Stomach (tissue), 19 donors: ENCODE measurements at regions of chr19 and their contacts with region 1.

Region 1: GRCh38 chr19:40806488-40807468 is 7.8 kb downstream of the EGLN2 start:
- DNase-seq: peak; percentile 62 to 96
- H3K4me3 ChIP-seq: peak overlapping the region in 2 of 4 donors; percentile 4 to 33
- H3K27ac ChIP-seq: peak overlapping the region; percentile 68 to 99 (median 95)
- H3K4me1 ChIP-seq: peaks cover 71 to 96% (median 93%) of the 10 kb centered on the region in 4 donors
- H3K27me3 ChIP-seq: no peaks in the 10 kb centered on the region
- CTCF ChIP-seq: peak in 5 of 7 experiments; percentile 58 to 88 (median 82)
- EP300 ChIP-seq: no peak
- POLR2A ChIP-seq: no peak

Region 2: DNA sequence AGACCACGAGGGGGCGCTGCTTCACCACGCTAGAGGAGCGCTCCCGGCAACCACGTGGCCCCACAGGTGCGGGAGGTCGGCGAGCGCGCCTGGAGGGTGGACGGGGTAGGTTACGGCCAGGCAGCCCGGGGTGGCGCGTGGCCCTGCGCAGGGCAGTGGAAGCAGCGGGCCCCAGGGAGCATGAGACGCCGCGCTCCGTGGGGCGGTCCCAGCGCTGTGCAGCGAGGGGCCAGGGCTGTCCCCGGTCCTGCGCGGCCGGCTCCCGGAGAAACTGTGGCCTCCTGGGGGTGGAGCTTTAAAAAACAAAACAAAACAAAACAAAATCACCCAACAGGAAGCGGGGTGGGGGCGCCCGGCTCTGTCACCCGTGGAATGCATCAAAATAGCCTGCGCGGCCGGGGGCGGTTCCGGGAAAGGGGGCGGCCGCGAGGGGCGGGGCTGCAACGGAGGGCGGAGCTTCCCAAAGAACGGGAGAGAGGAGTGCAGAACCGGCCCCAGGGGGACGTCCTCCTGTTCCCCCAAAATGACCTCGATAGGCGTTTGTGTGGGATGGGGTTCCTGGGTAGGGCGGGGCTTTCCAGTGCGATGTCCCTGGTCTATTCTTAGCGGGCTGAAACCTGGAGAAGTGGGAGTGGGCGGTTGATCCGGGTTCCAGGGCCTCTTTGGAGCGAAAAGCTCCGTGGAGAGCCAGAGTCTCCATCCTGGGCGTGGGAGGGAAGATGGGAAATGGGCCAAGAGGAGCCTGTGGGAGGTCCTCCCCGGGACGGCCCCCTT is 143.7 kb before region 1 on chr19:
- intact Hi-C with region 1: loop called (anchors 5 kb)
- DNase-seq: peak; percentile 94 to 96
- H3K4me3 ChIP-seq: peak overlapping the region; percentile 71 to 75 (median 72)
- H3K27ac ChIP-seq: peak overlapping the region; percentile 85 to 93 (median 89)
- H3K4me1 ChIP-seq: peaks cover 12 to 40% (median 23%) of the 10 kb centered on the region in 4 donors
- H3K27me3 ChIP-seq: no peaks in the 10 kb centered on the region
- CTCF ChIP-seq: peak in 4 of 7 experiments; percentile 96 to 98 (median 97)
- EP300 ChIP-seq: no peak
- POLR2A ChIP-seq: no peak

Region 3: DNA sequence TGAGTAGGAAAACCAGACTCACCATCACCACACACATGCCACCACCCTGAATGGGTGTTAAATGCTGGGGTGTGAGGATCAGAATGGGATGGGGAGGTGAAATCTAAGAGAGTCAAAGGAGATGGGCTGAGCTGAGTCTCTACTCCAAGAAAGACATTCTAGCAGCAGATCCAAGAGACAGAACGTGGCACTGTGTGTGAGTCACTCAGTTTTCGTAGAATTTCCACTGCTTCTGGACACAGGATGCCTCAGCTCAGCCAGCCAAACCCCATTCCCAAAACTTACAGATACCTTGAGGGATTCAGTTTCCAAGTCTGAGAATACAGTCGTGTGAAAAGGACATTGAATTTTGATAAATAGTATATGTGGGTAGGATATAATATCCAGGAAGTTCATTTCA is 82.6 kb after region 1 on chr19:
- intact Hi-C with region 1: no loop called
- DNase-seq: no peak
- H3K4me3 ChIP-seq: no peak overlapping the region
- H3K27ac ChIP-seq: no peak overlapping the region
- H3K4me1 ChIP-seq: no peaks in the 10 kb centered on the region
- H3K27me3 ChIP-seq: peaks cover 0 to 19% (median 0%) of the 10 kb centered on the region in 3 donors
- CTCF ChIP-seq: no peak
- EP300 ChIP-seq: no peak
- POLR2A ChIP-seq: no peak